Sigmoid colon (tissue), 7 donors: ENCODE measurements at regions of chr3 and their contacts with region 1.

Region 1: DNA sequence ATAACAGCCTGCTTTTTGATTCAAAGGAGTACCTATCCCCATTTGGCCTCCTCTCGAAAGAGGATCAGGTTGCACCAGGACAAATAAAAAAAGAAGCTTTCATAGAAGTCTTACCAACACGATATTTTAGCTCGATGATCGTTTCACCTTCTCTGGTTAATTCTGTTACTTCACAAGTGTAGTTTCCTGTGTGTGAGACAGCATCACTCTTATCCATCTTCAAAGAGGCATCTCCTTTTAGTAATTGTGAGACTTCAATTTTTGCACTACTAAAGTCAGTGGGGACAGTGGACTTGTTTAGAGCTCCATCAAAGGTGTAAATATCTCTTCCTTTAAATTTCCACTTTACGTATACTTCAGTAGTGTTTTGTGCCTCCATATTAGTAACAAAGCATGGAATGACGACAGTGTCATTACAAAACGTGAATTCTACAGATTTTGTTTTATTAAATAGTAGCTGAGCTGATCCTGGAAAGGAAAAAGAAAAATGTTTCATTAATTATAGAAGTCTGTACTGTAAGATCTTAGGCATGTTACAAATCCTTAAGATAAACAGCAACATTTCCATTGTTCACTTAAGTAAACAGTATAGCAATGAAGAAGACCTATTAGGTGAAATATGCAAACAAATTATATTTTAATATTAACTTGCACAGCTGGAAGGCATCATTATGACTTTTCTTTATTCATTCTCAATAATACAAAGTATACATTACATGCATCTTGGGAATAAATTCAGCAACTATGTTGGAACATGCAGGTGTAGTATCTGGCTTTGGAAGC is 10.8 kb downstream of the CD47 start:
- DNase-seq: no peak
- H3K4me3 ChIP-seq: no peak overlapping the region
- H3K27ac ChIP-seq: no peak overlapping the region
- H3K4me1 ChIP-seq: peaks cover 0 to 4% (median 2%) of the 10 kb centered on the region in 4 donors
- H3K27me3 ChIP-seq: no peaks in the 10 kb centered on the region
- CTCF ChIP-seq: no peak
- EP300 ChIP-seq: no peak
- POLR2A ChIP-seq: no peak

Region 2: GRCh38 chr3:107987036-107987947 is 92.8 kb before region 1 on chr3:
- intact Hi-C with region 1: loop called (anchors 5 kb)
- DNase-seq: peak; percentile 94
- H3K4me3 ChIP-seq: no peak overlapping the region
- H3K27ac ChIP-seq: peak overlapping the region; percentile 71 to 78 (median 76)
- H3K4me1 ChIP-seq: peaks cover 0 to 38% (median 32%) of the 10 kb centered on the region in 4 donors
- H3K27me3 ChIP-seq: no peaks in the 10 kb centered on the region
- CTCF ChIP-seq: no peak
- EP300 ChIP-seq: peak in 1 of 4 donors; percentile 41
- POLR2A ChIP-seq: no peak

Region 3: DNA sequence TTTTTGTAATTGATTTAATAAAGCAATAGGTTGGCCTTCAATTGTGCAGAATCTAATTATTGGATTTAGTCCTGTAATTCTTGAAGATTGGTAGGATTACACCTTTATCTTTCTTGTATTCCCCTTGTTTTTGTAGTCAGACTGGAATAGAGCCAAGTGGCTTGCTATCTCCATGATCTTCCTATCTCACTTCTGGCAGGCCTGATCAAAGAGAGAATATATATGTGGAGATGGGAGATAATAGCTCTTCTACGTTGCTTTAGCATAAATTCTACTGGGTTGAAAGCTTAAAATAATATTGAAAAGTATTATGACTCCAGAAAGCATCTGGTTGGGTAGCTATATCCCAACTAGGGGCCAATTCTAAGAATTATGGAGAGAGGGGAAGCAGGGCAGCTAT is 159.0 kb after region 1 on chr3:
- intact Hi-C with region 1: no loop called
- DNase-seq: no peak
- H3K4me3 ChIP-seq: no peak overlapping the region
- H3K27ac ChIP-seq: no peak overlapping the region
- H3K4me1 ChIP-seq: no peaks in the 10 kb centered on the region
- H3K27me3 ChIP-seq: no peaks in the 10 kb centered on the region
- CTCF ChIP-seq: no peak
- EP300 ChIP-seq: no peak
- POLR2A ChIP-seq: no peak